ENCODE measurements at regions of chr15 and their contacts with region 1.

Region 1: DNA sequence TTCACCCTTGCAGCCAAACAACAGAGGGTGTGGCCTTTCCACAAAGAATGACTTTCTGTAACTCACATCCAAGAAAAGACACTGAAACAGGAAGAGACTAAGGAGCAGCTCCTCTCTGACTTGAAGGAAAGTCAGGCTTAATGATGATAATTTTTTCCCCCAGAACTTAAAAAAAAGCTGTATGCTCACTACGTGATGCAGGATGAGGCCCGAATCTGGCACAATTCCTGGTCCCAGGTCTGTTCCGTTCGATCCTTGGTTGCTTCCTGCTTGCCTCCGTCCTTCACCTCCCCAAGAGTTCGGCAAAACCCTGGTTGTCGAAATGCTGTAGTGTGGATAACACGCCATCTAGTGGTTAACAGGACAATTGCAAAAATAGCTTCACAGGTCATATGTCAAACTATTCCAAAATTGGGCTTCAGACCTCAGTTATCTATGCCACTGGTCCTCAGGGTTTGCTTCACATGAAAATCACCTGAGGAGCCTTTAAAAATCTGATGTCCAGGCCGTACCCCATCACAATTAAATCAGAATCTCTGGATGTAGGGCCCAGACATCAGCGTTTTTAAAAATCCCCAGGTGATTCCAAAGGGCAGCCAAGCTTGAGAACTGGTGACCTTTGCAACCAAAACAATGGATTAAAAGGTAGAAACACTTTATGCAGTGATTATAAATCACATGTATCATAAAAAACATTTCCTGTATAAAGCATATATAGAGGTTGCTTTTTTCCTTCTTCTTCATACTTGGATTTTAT is 28.1 kb upstream of the SYNM start:
- DNase-seq: peak; percentile 35
- H3K4me3 ChIP-seq: peak overlapping the region; percentile 2; the same call in 1 of the 2 replicates
- H3K27me3 ChIP-seq: peaks cover 2% of the 10 kb centered on the region; the same call in 1 of the 2 replicates
- CTCF ChIP-seq: peak; percentile 83

Region 2: DNA sequence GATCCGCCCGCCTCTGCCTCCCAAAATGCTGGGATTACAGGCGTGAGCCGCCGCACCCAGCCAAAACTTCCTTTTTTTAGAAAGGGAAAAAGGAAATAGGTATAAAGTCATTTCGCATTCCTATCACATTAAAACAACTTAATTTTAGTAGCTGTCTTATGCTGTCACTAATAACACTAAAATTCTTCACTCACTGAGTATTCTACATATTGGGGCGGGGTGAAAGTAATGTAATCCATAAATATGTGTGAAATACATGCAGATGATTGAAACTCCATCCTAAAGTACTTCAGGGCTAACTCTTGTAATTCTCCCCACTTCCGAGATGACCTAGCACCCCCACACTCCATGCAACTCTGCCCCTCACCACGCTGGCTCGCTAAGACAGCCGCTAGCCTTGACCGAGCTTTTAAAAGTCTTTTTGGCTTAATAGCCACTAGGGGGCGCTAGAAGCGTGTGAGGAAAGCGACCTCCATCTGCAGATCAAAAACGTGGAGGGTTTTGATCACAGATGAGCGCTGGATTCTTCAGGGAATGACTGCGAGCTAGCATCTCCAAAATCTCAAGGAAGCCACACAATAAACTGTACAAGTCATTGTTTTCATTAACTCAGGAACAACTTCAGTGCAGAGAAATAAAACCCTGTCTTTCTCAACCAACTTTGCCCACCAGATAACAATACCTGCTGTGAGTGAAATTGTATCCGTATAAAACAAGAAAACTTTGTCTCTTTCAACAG is 557.7 kb before region 1 on chr15:
- CTCF ChIA-PET with region 1: interaction called, 88 read pairs
- POLR2A ChIA-PET with region 1: no interaction called
- DNase-seq: no peak
- H3K4me3 ChIP-seq: no peak overlapping the region
- H3K27me3 ChIP-seq: peaks cover 2% of the 10 kb centered on the region; the same call in 1 of the 2 replicates
- CTCF ChIP-seq: peak; percentile 77

Region 3: GRCh38 chr15:98856218-98856907 is 220.4 kb before region 1 on chr15:
- CTCF ChIA-PET with region 1: interaction called, 10 read pairs
- POLR2A ChIA-PET with region 1: no interaction called
- DNase-seq: peak; percentile 90
- H3K4me3 ChIP-seq: no peak overlapping the region
- H3K27me3 ChIP-seq: no peaks in the 10 kb centered on the region
- CTCF ChIP-seq: no peak

Region 4: DNA sequence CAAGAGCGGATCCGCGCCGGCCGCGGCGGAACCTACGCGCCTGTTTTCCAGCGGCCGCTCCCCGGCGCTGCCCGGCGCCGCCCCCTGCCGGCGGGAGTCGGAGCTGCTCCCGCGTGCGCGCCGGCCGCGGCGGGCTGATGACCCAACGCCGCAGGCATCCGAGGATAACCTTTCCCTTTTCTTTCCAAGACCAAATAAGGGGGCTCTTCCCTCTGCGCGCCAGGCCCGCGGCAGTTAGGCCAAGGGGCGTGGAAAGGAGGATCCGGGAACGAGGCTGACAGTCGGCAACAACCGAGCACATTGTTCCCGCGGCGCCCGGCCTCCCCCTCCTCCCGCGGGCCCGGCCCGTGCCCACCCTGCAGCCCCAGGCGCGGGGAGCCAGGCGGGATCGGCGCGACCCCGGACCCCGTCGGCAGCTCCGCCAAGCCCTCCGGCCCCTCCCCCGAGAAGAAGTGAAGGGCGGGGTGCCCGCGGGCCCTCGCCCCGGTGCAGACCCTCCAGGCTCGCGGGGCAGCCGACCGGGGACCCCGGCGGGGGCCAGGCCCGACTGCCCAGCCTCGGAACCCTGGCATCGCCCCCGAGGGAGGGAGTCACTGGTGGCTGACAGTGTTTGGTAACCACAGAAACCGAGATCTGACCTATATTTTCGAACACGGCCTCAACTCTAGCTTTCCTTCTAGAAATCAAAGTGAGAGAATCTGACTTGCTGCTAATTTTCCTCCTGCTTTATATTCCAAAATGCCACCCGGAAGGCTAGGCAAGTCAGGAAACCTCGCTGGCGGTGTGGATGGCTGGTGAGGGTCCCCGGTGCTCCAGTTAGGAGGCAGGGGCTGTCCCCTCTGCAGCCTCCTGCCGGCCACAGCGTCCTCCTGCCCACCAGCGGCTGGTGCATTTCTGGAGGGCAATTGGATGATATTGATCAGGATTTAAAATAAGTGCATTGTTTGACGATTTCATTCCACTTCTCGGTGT is 17.4 kb before region 1 on chr15:
- CTCF ChIA-PET with region 1: interaction called, 21 read pairs
- POLR2A ChIA-PET with region 1: no interaction called
- DNase-seq: peak; percentile 49
- H3K4me3 ChIP-seq: peak overlapping the region; percentile 41
- H3K27me3 ChIP-seq: peaks cover 1% of the 10 kb centered on the region; the same call in 1 of the 2 replicates
- CTCF ChIP-seq: peak; percentile 47

Measured in BJ (cell line).